ENCODE measurements at regions of chr11 and their contacts with region 1.

Region 1: GRCh38 chr11:118689851-118690552 is 10.6 kb upstream of the TREH start:
- DNase-seq: peak; percentile 97
- H3K4me3 ChIP-seq: peak overlapping the region; percentile 39 to 62
- H3K27ac ChIP-seq: peak overlapping the region; percentile 70 to 91; a peak in 3 of 4 replicates
- H3K4me1 ChIP-seq: peaks cover 5 to 15% of the 10 kb centered on the region in 2 experiments; a peak in 2 of 4 replicates
- H3K27me3 ChIP-seq: no peaks in the 10 kb centered on the region
- CTCF ChIP-seq: peak; percentile 89
- EP300 ChIP-seq: peak in 1 of 2 experiments; percentile 73; a peak in 2 of 4 replicates
- RAD21 ChIP-seq: peak; percentile 81

Region 2: GRCh38 chr11:118434123-118434551 is 255.9 kb before region 1 on chr11:
- CTCF ChIA-PET with region 1: no interaction called
- POLR2A ChIA-PET with region 1: no interaction called
- DNase-seq: peak; percentile 67
- H3K4me3 ChIP-seq: peak overlapping the region in 1 of 2 experiments; percentile 68; a peak in 3 of 4 replicates
- H3K27ac ChIP-seq: peak overlapping the region in 1 of 2 experiments; percentile 99; a peak in 2 of 4 replicates
- H3K4me1 ChIP-seq: peaks cover 9 to 24% of the 10 kb centered on the region in 2 experiments; a peak in 3 of 4 replicates
- H3K27me3 ChIP-seq: no peaks in the 10 kb centered on the region
- CTCF ChIP-seq: no peak
- EP300 ChIP-seq: no peak
- RAD21 ChIP-seq: no peak

Region 3: DNA sequence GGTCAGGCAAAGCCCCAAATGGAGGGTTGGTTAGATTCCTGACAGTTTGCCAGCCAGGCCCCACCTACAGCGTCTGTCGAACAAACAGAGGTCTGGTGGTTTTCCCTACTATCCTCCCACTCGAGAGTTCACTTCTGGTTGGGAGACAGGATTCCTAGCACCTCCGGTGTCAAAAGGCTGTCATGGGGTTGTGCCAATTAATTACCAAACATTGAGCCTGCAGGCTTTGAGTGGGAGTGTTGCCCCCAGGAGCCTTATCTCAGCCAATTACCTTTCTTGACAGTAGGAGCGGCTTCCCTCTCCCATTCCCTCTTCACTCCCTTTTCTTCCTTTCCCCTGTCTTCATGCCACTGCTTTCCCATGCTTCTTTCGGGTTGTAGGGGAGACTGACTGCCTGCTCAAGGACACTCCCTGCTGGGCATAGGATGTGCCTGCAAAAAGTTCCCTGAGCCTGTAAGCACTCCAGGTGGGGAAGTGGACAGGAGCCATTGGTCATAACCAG is 167.4 kb before region 1 on chr11:
- CTCF ChIA-PET with region 1: no interaction called
- POLR2A ChIA-PET with region 1: no interaction called
- DNase-seq: peak; percentile 52
- H3K4me3 ChIP-seq: no peak overlapping the region
- H3K27ac ChIP-seq: no peak overlapping the region
- H3K4me1 ChIP-seq: no peaks in the 10 kb centered on the region; a peak in 1 of 4 replicates
- H3K27me3 ChIP-seq: no peaks in the 10 kb centered on the region
- CTCF ChIP-seq: peak; percentile 47
- EP300 ChIP-seq: no peak
- RAD21 ChIP-seq: peak; percentile 41

Region 4: GRCh38 chr11:118592616-118593367 is 97.2 kb before region 1 on chr11:
- CTCF ChIA-PET with region 1: interaction called, 15 read pairs
- POLR2A ChIA-PET with region 1: no interaction called
- DNase-seq: no peak
- H3K4me3 ChIP-seq: no peak overlapping the region
- H3K27ac ChIP-seq: peak overlapping the region in 1 of 2 experiments; percentile 18; a peak in 1 of 4 replicates
- H3K4me1 ChIP-seq: peaks cover 0 to 6% of the 10 kb centered on the region in 2 experiments; a peak in 2 of 4 replicates
- H3K27me3 ChIP-seq: no peaks in the 10 kb centered on the region
- CTCF ChIP-seq: no peak
- EP300 ChIP-seq: no peak
- RAD21 ChIP-seq: no peak

Region 5: DNA sequence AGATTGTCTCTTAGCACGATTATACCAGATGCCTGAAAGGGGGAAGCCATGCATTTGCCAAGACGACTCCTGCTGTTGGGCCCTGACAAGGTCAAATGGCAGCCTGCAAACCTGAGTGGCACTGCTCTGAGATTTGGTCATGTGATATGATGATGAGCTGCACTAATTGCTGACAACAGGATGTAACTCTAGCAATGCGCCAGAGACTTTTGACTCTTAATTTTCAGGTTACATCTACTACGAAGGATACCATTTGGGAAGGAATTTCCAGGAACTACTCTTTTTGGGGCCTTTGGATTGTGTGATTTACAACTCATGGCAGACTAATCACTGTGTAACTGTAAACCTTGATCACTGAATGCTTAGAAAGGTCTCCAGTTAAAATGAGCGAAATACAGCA is 23.6 kb before region 1 on chr11:
- CTCF ChIA-PET with region 1: interaction called, 26 read pairs
- POLR2A ChIA-PET with region 1: no interaction called
- DNase-seq: no peak
- H3K4me3 ChIP-seq: no peak overlapping the region
- H3K27ac ChIP-seq: no peak overlapping the region
- H3K4me1 ChIP-seq: no peaks in the 10 kb centered on the region; a peak in 1 of 4 replicates
- H3K27me3 ChIP-seq: no peaks in the 10 kb centered on the region
- CTCF ChIP-seq: no peak
- EP300 ChIP-seq: no peak
- RAD21 ChIP-seq: no peak

Region 6: GRCh38 chr11:118703563-118704106 is 13.6 kb after region 1 on chr11:
- CTCF ChIA-PET with region 1: interaction called, 31 read pairs
- POLR2A ChIA-PET with region 1: no interaction called
- DNase-seq: no peak
- H3K4me3 ChIP-seq: no peak overlapping the region
- H3K27ac ChIP-seq: no peak overlapping the region
- H3K4me1 ChIP-seq: peaks cover 0 to 12% of the 10 kb centered on the region in 2 experiments; a peak in 1 of 4 replicates
- H3K27me3 ChIP-seq: no peaks in the 10 kb centered on the region
- CTCF ChIP-seq: no peak
- EP300 ChIP-seq: no peak
- RAD21 ChIP-seq: no peak

Region 7: DNA sequence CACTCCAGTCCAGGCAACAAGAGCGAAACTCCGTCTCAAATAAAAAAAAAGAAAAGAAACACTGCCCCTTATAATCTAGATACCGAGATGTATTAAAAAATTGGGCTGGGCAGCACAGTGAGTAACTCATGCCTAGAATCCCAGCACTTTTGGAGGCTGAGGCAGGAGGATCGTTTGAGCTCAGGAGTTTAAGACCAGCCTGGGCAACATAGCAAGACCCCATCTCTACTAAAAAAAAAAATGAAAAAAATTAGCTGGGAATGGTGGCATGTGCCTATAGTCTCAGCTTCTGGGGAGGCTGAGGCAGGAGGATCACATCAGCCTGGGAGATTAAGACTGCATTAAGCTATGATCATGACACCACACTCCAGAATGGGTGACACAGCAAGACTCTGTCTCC is 76.0 kb after region 1 on chr11:
- CTCF ChIA-PET with region 1: interaction called, 13 read pairs
- POLR2A ChIA-PET with region 1: no interaction called
- DNase-seq: no peak
- H3K4me3 ChIP-seq: no peak overlapping the region
- H3K27ac ChIP-seq: no peak overlapping the region
- H3K4me1 ChIP-seq: peaks cover 0 to 4% of the 10 kb centered on the region in 2 experiments; a peak in 2 of 4 replicates
- H3K27me3 ChIP-seq: no peaks in the 10 kb centered on the region
- CTCF ChIP-seq: no peak
- EP300 ChIP-seq: no peak
- RAD21 ChIP-seq: no peak

Region 8: DNA sequence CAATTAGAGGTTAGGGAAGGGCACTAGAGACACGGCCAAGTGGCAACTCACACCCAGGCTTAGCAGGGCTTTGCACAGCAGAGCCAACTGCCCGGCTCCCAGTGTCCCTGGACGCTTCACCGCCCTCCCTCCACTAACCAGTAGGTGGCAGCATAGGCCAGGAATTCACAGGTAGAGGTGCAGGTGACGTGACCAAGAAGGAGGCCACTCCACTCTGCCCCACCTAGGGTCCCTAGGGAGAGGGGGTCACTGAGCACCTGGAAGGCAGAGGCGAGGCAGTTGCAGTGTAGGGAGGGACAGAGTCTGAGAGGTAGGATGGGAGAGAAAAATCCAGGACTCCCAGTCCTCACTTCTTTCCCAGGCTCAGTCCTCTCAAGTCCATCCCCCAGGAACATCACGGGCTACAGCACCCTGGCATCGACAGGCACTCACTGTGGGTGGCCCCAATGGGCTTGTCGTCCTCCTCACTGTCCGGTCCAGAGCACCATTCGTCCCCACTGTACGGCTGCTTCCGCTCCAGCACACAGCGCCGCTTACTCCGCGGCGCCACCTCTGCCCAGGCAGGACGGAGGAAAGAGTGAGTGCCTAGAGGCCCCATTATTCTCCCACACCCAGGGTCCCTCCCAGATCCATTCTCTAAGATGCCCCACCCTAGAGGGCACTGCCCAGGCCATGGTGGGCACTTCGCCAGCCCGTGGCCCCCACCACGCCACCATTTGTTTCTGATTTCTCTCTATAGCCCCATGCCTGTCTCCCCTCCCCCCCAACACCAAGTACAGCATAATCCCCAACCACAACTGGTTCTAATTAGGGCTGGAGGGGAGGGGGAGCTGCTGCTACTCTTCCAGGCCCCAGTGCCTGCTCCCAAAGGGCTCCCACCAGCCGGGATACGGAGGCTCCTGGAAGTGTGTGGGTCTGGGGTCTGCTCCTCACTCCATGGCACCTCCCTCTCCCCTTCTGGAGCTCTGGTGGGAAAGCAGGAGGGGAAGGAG is 217.3 kb after region 1 on chr11:
- CTCF ChIA-PET with region 1: interaction called, 38 read pairs
- POLR2A ChIA-PET with region 1: no interaction called
- DNase-seq: peak; percentile 90
- H3K4me3 ChIP-seq: peak overlapping the region; percentile 18 to 23; a peak in 2 of 4 replicates
- H3K27ac ChIP-seq: peak overlapping the region; percentile 98 to 100
- H3K4me1 ChIP-seq: peaks cover 45 to 49% of the 10 kb centered on the region in 2 experiments
- H3K27me3 ChIP-seq: no peaks in the 10 kb centered on the region
- CTCF ChIP-seq: peak; percentile 93
- EP300 ChIP-seq: peak in 1 of 2 experiments; percentile 46; a peak in 2 of 4 replicates
- RAD21 ChIP-seq: peak; percentile 98

Region 9: GRCh38 chr11:118933501-118933949 is 243.5 kb after region 1 on chr11:
- CTCF ChIA-PET with region 1: interaction called, 31 read pairs
- POLR2A ChIA-PET with region 1: no interaction called
- DNase-seq: peak; percentile 7
- H3K4me3 ChIP-seq: no peak overlapping the region
- H3K27ac ChIP-seq: no peak overlapping the region
- H3K4me1 ChIP-seq: peaks cover 5 to 13% of the 10 kb centered on the region in 2 experiments; a peak in 2 of 4 replicates
- H3K27me3 ChIP-seq: no peaks in the 10 kb centered on the region
- CTCF ChIP-seq: no peak
- EP300 ChIP-seq: no peak
- RAD21 ChIP-seq: no peak